ENCODE measurements at regions of chr14 and their contacts with region 1.

Region 1: GRCh38 chr14:95979339-95980042 is 59.7 kb upstream of the C14orf132 start:
- DNase-seq: peak; percentile 57 to 58
- H3K4me3 ChIP-seq: peak overlapping the region in 2 of 4 experiments; percentile 14 to 36; a peak in 2 of 8 replicates
- H3K27ac ChIP-seq: peak overlapping the region; percentile 88
- H3K4me1 ChIP-seq: peaks cover 15 to 28% (median 25%) of the 10 kb centered on the region in 4 experiments
- H3K27me3 ChIP-seq: no peaks in the 10 kb centered on the region
- CTCF ChIP-seq: peak; percentile 25 to 58 (median 54)
- EP300 ChIP-seq: peak in 1 of 2 experiments; percentile 80; a peak in 1 of 3 replicates
- POLR2A ChIP-seq: no peak
- RAD21 ChIP-seq: peak; percentile 64 to 75

Region 2: DNA sequence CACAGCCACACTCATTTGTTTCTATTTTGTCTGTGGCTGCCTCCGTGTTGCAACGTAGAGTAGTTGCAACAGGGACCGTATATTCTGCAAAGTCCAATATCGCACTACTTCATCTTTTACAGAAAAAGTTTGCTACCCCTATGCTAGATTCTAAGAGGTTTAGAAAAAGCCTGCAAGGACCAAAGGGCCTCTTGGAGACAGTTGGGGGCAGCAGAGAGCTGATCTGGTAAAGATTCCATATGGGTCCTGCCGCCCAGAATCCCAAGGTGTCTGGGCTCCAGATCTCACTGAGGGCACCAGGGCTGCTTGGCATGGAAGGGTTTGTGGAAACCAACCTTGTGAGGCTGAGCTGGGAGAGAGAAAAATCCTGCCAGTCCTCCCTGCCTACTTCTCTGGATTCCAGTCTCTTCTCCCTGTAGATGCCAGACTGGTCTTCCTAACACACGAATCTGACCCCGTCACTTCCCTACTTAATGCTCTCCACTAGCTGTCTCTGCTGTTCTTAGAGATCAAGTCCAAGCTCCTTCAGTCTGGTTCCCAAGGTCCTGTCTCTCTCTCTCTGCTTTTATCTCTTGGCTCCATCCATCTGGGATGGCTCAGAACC is 370.0 kb before region 1 on chr14:
- CTCF ChIA-PET with region 1: interaction called, 24 read pairs
- POLR2A ChIA-PET with region 1: no interaction called
- DNase-seq: peak in 1 of 2 experiments; percentile 80
- H3K4me3 ChIP-seq: no peak overlapping the region
- H3K27ac ChIP-seq: no peak overlapping the region
- H3K4me1 ChIP-seq: no peaks in the 10 kb centered on the region; a peak in 1 of 7 replicates
- H3K27me3 ChIP-seq: peaks cover 0 to 4% (median 0%) of the 10 kb centered on the region in 4 experiments; a peak in 1 of 7 replicates
- CTCF ChIP-seq: peak; percentile 47 to 83 (median 82)
- EP300 ChIP-seq: no peak
- POLR2A ChIP-seq: no peak
- RAD21 ChIP-seq: peak; percentile 87 to 90

Region 3: GRCh38 chr14:95895720-95896119 is 83.8 kb before region 1 on chr14:
- CTCF ChIA-PET with region 1: interaction called, 33 read pairs
- POLR2A ChIA-PET with region 1: interaction called, 4 read pairs
- DNase-seq: peak; percentile 34 to 77
- H3K4me3 ChIP-seq: no peak overlapping the region
- H3K27ac ChIP-seq: no peak overlapping the region
- H3K4me1 ChIP-seq: peaks cover 8 to 19% (median 17%) of the 10 kb centered on the region in 4 experiments
- H3K27me3 ChIP-seq: no peaks in the 10 kb centered on the region
- CTCF ChIP-seq: peak; percentile 68 to 75 (median 72)
- EP300 ChIP-seq: no peak
- POLR2A ChIP-seq: no peak
- RAD21 ChIP-seq: peak; percentile 46 to 71

Region 4: GRCh38 chr14:95915323-95915722 is 64.2 kb before region 1 on chr14:
- CTCF ChIA-PET with region 1: interaction called, 11 read pairs
- POLR2A ChIA-PET with region 1: no interaction called
- DNase-seq: peak; percentile 33 to 64
- H3K4me3 ChIP-seq: no peak overlapping the region
- H3K27ac ChIP-seq: no peak overlapping the region
- H3K4me1 ChIP-seq: peaks cover 8 to 16% (median 12%) of the 10 kb centered on the region in 4 experiments
- H3K27me3 ChIP-seq: no peaks in the 10 kb centered on the region
- CTCF ChIP-seq: peak; percentile 4 to 19 (median 16); a peak in 3 of 4 replicates
- EP300 ChIP-seq: no peak
- POLR2A ChIP-seq: no peak
- RAD21 ChIP-seq: peak; percentile 13 to 20; a peak in 1 of 4 replicates

Region 5: GRCh38 chr14:95928751-95929150 is 50.7 kb before region 1 on chr14:
- CTCF ChIA-PET with region 1: interaction called, 5 read pairs
- POLR2A ChIA-PET with region 1: interaction called, 10 read pairs
- DNase-seq: no peak
- H3K4me3 ChIP-seq: no peak overlapping the region
- H3K27ac ChIP-seq: no peak overlapping the region
- H3K4me1 ChIP-seq: peaks cover 0 to 13% (median 6%) of the 10 kb centered on the region in 4 experiments; a peak in 5 of 7 replicates
- H3K27me3 ChIP-seq: no peaks in the 10 kb centered on the region
- CTCF ChIP-seq: no peak
- EP300 ChIP-seq: no peak
- POLR2A ChIP-seq: no peak
- RAD21 ChIP-seq: no peak

Region 6: DNA sequence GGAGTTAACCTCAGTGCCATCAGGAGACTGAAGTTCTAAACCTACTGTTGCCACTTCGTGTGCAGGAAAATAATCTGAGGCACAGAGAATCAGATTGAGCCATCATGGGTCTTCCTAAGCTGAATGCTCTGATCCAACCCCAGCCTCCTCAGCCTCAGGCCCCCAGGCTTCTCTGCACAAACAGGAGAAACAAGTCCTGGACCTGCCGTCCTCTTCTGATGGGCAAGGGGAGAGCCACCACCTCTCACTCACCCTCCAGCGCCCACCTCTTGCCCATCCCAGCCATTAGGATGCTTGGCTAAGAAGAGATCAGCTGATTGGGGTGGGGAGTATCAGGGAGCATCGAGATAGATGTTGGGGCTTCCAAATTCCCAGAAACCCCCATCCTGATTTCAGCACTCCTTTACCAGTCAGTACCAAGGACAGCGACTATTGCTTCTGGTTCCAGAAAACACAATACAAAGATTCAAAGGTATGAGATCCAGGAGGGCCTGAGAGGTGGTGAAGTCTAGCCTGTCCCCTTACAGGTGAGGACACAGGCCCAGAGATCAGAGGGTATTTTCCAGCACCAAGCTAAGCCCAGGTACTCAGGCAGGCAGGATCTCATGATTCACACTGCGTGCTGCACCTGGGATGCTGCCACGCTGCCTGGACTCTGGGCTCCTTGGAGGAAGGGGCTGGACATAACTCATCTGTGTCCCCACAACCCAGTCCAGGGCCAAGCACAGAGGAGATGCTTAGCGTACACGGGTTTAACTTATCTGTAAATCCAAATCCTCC is 26.4 kb before region 1 on chr14:
- CTCF ChIA-PET with region 1: interaction called, 11 read pairs
- POLR2A ChIA-PET with region 1: interaction called, 34 read pairs
- DNase-seq: peak in 1 of 2 experiments; percentile 54
- H3K4me3 ChIP-seq: no peak overlapping the region
- H3K27ac ChIP-seq: no peak overlapping the region
- H3K4me1 ChIP-seq: peaks cover 0 to 15% (median 9%) of the 10 kb centered on the region in 4 experiments; a peak in 4 of 7 replicates
- H3K27me3 ChIP-seq: no peaks in the 10 kb centered on the region
- CTCF ChIP-seq: no peak
- EP300 ChIP-seq: no peak
- POLR2A ChIP-seq: no peak
- RAD21 ChIP-seq: no peak

Region 7: GRCh38 chr14:95961481-95961880 is 18.0 kb before region 1 on chr14:
- CTCF ChIA-PET with region 1: interaction called, 20 read pairs
- POLR2A ChIA-PET with region 1: interaction called, 3 read pairs
- DNase-seq: no peak
- H3K4me3 ChIP-seq: no peak overlapping the region
- H3K27ac ChIP-seq: no peak overlapping the region
- H3K4me1 ChIP-seq: peaks cover 0 to 15% (median 9%) of the 10 kb centered on the region in 4 experiments; a peak in 4 of 7 replicates
- H3K27me3 ChIP-seq: no peaks in the 10 kb centered on the region
- CTCF ChIP-seq: no peak
- EP300 ChIP-seq: no peak
- POLR2A ChIP-seq: no peak
- RAD21 ChIP-seq: no peak

Region 8: GRCh38 chr14:96030108-96030760 is 50.7 kb after region 1 on chr14:
- CTCF ChIA-PET with region 1: no interaction called
- POLR2A ChIA-PET with region 1: no interaction called
- DNase-seq: no peak
- H3K4me3 ChIP-seq: no peak overlapping the region
- H3K27ac ChIP-seq: no peak overlapping the region
- H3K4me1 ChIP-seq: no peaks in the 10 kb centered on the region; a peak in 1 of 7 replicates
- H3K27me3 ChIP-seq: no peaks in the 10 kb centered on the region; a peak in 1 of 7 replicates
- CTCF ChIP-seq: no peak
- EP300 ChIP-seq: no peak
- POLR2A ChIP-seq: no peak
- RAD21 ChIP-seq: no peak

Measured in H1 (cell line).